ENCODE measurements at regions of chr1 and their contacts with region 1.

Region 1: DNA sequence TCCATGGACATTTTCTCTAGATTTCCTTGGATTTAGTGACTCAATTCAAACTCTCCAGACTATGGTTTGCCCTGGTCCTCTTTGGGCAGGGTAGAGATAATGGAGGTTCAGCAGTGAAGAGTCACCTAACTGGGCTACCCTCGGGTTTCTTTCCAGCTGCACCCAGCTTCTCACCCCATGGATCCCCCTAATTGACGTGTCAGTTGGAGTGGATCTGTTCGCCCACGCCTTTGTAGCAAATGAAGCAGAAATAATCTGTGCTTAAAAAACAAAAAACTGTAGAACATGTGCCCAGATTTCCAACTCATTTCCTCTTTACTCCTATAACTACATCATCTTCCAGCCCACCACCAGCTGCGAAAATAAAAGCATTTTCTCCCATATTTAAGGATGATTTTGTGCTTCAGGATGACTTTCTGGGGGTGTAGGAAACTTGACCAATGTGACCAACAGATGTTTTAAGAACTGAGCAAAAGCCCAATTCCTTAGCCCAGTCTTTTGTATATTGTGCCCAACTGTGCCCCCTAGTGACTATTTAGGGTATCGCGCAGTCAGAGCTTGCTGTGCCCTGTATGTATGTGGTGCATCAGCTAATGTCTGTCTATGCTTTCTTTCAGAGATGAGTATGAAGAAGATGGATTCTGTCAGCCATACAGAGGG is 66.5 kb upstream of the UBE2U start:
- DNase-seq: peak; percentile 67 to 82 (median 74)
- H3K4me3 ChIP-seq: no peak overlapping the region
- H3K27ac ChIP-seq: no peak overlapping the region
- H3K4me1 ChIP-seq: no peaks in the 10 kb centered on the region
- H3K27me3 ChIP-seq: peaks cover 0 to 5% (median 0%) of the 10 kb centered on the region in 5 experiments

Region 2: DNA sequence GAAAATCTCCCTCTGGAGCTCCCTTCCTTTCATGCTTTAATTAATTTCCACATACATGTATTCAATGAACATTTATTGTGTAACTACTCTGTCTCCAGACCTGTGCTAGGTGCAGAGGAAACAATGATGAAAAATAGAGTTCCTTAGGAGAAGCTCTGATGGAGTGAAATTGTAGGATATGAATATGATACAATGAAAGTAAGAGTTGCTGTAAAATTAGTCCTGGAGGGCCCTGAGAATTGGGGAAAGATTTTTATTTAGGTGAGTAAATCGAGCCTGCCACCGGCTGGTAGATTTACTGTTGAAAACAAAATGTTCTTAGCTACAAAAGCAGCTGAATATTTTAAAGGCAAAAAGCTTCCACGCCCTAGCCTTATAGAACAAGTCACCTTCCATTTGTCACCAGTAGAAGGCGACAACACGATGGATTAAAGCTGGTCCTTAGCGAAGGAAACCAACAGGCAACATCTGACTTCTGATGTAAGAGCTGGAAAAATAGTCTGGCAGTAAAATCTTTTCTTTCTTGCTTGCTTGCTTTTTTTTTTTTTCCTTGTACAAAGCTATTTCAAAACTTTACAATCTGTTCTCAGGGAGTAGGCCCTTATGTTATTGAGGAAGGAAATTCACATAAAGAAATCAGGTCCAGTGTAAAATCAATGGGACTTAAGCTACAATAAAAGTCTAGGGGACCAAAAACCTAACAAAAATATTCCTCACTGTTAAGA is 445.0 kb before region 1 on chr1:
- CTCF ChIA-PET with region 1: interaction called, 30 read pairs
- POLR2A ChIA-PET with region 1: no interaction called
- DNase-seq: peak; percentile 72 to 86 (median 82)
- H3K4me3 ChIP-seq: no peak overlapping the region
- H3K27ac ChIP-seq: no peak overlapping the region
- H3K4me1 ChIP-seq: no peaks in the 10 kb centered on the region
- H3K27me3 ChIP-seq: peaks cover 0 to 1% (median 0%) of the 10 kb centered on the region in 5 experiments

Region 3: DNA sequence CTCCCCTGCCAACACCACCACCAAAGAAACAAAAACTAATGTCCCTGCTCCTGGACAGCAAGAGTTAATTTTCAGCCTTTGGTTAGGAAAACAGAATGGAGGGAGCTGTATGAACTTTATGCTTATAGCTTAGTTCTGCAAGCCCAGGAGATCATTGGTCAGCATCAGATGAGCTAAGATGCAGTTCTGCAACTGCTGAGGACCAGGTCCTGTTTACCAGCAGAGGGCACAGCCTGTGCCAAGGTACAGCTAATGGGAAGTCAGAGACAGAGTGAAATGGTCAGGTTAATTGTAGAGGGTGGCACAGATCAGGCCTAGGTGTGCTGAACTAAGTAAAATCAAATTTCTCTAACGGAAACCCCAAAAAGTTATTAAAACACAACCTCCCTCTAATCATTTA is 201.7 kb before region 1 on chr1:
- CTCF ChIA-PET with region 1: interaction called, 24 read pairs
- POLR2A ChIA-PET with region 1: interaction called, 3 read pairs
- DNase-seq: peak; percentile 25 to 45 (median 30)
- H3K4me3 ChIP-seq: no peak overlapping the region
- H3K27ac ChIP-seq: no peak overlapping the region
- H3K4me1 ChIP-seq: peaks cover 8 to 27% (median 21%) of the 10 kb centered on the region in 4 experiments
- H3K27me3 ChIP-seq: no peaks in the 10 kb centered on the region

Region 4: DNA sequence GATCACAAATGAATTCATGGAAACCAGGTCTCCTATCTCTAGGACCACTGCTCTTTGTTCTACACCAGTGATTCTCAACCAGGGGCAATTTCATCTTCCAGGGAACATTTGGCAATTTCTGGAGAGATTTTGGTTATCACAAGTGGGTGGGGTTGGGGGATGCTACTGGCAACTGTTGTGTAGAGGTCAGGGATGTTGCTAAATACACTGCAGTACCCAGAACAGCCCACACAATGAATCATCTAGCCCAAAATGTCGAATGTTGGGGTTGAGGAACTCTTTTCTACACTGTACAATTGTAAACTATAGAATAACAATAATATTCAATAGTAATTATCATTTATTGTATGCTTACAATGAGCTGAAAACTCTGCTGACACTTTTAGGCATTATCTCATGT is 10.9 kb after region 1 on chr1:
- CTCF ChIA-PET with region 1: interaction called, 35 read pairs
- POLR2A ChIA-PET with region 1: interaction called, 3 read pairs
- DNase-seq: no peak
- H3K4me3 ChIP-seq: no peak overlapping the region
- H3K27ac ChIP-seq: no peak overlapping the region
- H3K4me1 ChIP-seq: peaks cover 0 to 13% (median 5%) of the 10 kb centered on the region in 4 experiments
- H3K27me3 ChIP-seq: no peaks in the 10 kb centered on the region

Region 5: GRCh38 chr1:64163970-64164369 is 27.1 kb after region 1 on chr1:
- CTCF ChIA-PET with region 1: interaction called, 16 read pairs
- POLR2A ChIA-PET with region 1: no interaction called
- DNase-seq: peak in 1 of 3 donors; percentile 8
- H3K4me3 ChIP-seq: no peak overlapping the region
- H3K27ac ChIP-seq: no peak overlapping the region
- H3K4me1 ChIP-seq: no peaks in the 10 kb centered on the region
- H3K27me3 ChIP-seq: no peaks in the 10 kb centered on the region

Region 6: DNA sequence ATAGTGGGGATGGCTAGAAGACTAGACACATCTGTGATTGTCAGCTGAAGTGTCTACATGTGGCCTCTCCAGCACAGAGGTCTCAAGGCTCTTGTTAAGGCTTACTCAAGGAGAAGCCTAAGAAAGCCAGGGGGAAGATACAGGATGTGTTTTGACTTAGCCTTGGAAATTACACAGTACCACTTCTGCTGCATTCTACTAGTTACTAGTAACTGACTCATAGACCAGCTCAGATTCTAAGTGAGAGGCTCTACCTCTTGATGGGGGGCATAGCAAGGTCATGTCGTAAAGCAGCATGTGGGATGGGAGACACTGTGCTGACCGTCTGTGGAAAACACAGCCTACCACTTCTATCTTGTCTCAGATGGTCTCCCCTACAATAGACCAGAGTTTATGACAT is 166.1 kb after region 1 on chr1:
- CTCF ChIA-PET with region 1: no interaction called
- POLR2A ChIA-PET with region 1: no interaction called
- DNase-seq: no peak
- H3K4me3 ChIP-seq: no peak overlapping the region
- H3K27ac ChIP-seq: no peak overlapping the region
- H3K4me1 ChIP-seq: peaks cover 0 to 3% (median under 1%) of the 10 kb centered on the region in 4 experiments
- H3K27me3 ChIP-seq: no peaks in the 10 kb centered on the region